Activated CD4-positive, alpha-beta T cell treated with anti-CD3 and anti-CD28 coated beads, Interleukin-2, amount 10 ng/mL, durations not matched to agents 24 days and 14 days (primary cell): ENCODE measurements at regions of chr16 and their contacts with region 1.

Region 1: GRCh38 chr16:87461466-87461991 is 31.3 kb downstream of the ZCCHC14 start:
- DNase-seq: peak; percentile 63
- H3K4me3 Mint-ChIP-seq: no peak overlapping the region
- H3K27ac Mint-ChIP-seq: no peak overlapping the region
- H3K4me1 Mint-ChIP-seq: peaks cover 36% of the 10 kb centered on the region
- H3K27me3 Mint-ChIP-seq: peaks cover 2% of the 10 kb centered on the region

Region 2: GRCh38 chr16:87484487-87485331 is 23.2 kb after region 1 on chr16:
- intact Hi-C with region 1: loop called (anchors 2 kb)
- DNase-seq: no peak
- H3K4me3 Mint-ChIP-seq: no peak overlapping the region
- H3K27ac Mint-ChIP-seq: peak overlapping the region; percentile 20
- H3K4me1 Mint-ChIP-seq: peaks cover 28% of the 10 kb centered on the region
- H3K27me3 Mint-ChIP-seq: peaks cover 6% of the 10 kb centered on the region

Region 3: GRCh38 chr16:87499189-87499486 is 37.6 kb after region 1 on chr16:
- intact Hi-C with region 1: loop called (anchors 5 kb)
- DNase-seq: no peak
- H3K4me3 Mint-ChIP-seq: no peak overlapping the region
- H3K27ac Mint-ChIP-seq: no peak overlapping the region
- H3K4me1 Mint-ChIP-seq: peaks cover 11% of the 10 kb centered on the region
- H3K27me3 Mint-ChIP-seq: peaks cover 21% of the 10 kb centered on the region

Region 4: DNA sequence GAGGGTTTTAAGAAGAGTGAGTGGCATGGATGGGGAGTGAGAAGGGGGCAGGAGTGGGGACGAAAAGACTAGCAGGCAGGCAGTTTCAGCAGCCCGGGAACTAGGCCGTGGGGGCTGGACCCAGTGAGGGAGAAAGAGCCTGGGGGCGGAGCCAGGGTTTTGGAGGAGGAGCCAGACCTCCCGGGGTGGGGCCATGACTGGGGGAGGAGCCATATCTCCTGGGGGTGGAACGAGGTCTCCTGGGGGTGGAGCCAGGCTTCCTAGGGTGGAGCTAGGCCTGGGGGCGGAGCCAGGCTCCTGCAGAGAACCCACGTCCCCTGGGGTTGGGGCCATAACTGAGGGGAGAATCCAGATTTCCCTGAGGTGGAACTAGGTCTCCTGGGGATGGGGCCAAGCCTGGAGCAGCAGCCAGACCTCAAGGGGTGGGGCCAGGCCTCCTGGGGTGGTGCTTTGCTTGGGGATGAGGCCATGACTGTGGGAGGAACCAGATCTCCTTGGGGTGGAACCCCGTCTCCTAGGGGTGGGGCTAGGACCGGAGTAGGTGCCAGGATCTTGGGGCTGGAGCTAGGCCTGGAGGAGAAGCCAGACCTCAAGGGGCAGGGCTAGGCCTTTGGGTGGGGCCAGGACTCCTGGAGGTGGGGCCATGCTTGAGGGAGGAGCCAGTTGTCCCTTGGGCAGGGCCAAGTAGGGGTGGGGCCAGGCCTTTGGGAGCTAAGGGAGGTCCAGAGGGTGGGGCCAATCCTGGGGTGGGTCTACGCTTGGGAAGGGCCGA is 99.1 kb after region 1 on chr16:
- intact Hi-C with region 1: no loop called
- DNase-seq: peak; percentile 72
- H3K4me3 Mint-ChIP-seq: no peak overlapping the region
- H3K27ac Mint-ChIP-seq: no peak overlapping the region
- H3K4me1 Mint-ChIP-seq: no peaks in the 10 kb centered on the region
- H3K27me3 Mint-ChIP-seq: peaks cover 2% of the 10 kb centered on the region

Region 5: DNA sequence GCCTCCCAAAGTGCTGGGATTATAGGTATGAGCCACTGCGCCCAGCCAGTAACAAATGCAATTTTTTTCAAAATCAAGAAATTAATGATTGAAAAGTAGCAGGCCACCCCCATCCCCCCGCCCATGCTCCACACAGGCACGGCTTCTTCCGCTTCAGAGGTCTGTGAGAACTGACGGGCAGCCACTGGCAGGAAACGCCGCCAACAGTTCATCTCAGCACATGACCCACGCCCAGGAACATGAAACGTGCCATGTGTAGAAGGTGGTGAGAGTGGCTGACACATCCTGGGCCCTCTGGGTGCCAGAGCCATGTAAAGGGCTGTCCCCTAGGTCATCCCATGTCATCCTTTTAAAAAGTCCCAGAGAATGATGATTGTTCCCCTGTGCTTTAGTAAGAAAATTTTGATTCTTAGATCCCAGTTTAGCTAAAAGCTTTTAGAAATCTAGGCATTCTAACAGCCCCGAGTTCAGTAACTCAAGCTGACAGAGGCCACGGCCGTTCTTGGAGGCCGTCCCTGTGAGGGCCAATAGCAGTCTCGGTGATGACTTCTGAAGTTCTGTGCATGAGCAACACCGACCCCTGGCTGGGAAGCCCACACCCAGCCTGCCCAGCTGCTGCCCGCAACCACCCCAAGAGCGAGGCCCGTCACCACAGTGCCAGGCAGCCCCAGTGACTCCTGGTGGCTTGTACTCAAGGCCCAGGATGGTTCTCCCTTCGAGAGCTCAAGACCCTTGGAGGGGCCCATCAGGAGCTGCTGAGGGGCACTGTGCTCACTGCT is 252.1 kb after region 1 on chr16:
- intact Hi-C with region 1: no loop called
- DNase-seq: peak; percentile 75
- H3K4me3 Mint-ChIP-seq: no peak overlapping the region
- H3K27ac Mint-ChIP-seq: peak overlapping the region; percentile 48
- H3K4me1 Mint-ChIP-seq: peaks cover 3% of the 10 kb centered on the region
- H3K27me3 Mint-ChIP-seq: no peaks in the 10 kb centered on the region